Dorsolateral prefrontal cortex (tissue), 120 donors: ENCODE measurements at regions of chr17 and their contacts with region 1.

Region 1: DNA sequence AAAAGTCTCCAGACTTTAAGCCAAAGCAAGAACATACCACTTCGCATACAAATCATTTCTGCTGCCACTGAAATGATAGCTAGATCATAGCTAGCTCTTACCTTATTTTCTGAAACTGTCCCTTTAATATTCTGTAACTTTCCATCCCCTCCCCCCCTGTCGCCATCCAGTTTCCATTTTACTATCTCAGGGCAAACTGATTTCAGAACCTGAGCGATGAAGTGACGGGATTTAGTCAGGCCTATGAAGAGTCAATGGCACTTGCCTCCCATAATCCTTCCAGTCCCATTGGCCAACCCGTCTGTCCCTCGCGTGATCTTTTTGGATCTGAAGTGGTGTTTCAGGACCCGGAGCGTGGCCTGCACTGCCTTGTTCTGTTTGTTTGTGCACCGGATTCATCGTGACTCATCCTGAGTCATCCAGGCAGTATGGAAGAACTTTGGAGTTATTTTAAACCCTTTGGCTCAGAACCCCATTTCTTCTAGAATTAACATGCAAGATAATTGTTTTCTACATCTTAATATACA is 199.8 kb upstream of the CHMP6 start:
- DNase-seq: peak in 5 of 10 donors; percentile 37 to 84 (median 73)
- H3K4me3 ChIP-seq: peak overlapping the region in 15 of 59 donors; percentile 2 to 36 (median 20)
- H3K27ac ChIP-seq: peak overlapping the region in 56 of 59 donors; percentile 21 to 87 (median 74)
- H3K27me3 ChIP-seq: no peaks in the 10 kb centered on the region
- CTCF ChIP-seq: no peak

Region 2: GRCh38 chr17:80755650-80756405 is 36.0 kb before region 1 on chr17:
- intact Hi-C with region 1: loop called in 1 of 2 experiments (anchors 5 kb)
- DNase-seq: no peak
- H3K4me3 ChIP-seq: no peak overlapping the region
- H3K27ac ChIP-seq: no peak overlapping the region
- H3K27me3 ChIP-seq: no peaks in the 10 kb centered on the region
- CTCF ChIP-seq: peak in 8 of 56 donors; percentile 7 to 37 (median 18)

Region 3: DNA sequence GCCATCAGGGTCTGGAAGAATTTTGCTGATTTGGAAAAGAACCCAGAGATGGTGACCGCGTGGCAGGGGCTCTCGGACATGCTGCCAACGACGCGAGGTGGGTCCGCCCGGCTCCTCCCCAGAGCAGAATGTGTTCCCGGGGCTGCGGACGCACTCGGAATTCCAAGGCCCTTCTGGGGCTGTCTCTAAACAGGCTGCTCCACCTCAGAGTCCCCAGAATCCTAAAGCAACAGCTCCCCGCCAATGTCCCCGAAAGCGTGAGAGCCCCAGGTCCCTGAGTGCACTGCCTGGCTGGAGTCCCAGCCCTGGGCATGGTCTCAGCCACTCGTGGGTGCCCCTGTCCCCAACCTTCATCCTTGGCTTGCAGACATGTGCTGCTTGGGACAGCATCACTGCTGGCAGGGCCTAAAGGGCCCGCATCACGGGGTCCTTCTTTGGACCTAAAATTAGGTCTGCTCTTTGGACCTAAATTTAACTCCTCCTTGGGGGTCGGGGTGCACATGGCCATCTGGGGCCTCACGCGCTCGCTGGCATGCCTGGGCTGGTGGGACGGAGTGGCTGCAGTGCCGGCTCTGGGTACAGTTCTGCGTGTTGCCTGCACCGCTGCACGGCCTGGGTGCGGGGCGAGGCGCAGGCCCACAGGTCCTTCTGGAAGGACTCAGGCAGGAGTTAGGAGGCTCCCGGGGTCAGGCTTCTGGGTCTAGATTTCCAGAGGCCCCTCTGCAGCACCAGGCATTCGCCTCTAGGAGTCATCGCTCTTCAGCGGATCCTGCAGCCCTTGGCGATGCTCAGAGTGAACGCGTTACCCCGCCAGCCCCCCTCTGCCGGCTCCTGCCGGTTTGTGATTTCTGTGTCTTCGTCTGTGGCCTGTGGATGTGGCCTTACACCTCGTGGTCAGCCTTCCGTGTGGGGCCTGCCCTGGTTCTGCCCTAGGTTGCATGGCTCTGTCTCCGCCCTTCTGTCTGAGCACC is 157.9 kb after region 1 on chr17:
- intact Hi-C with region 1: no loop called
- DNase-seq: peak in 4 of 10 donors; percentile 26 to 38 (median 35)
- H3K4me3 ChIP-seq: no peak overlapping the region
- H3K27ac ChIP-seq: peak overlapping the region in 1 of 59 donors; percentile 2
- H3K27me3 ChIP-seq: no peaks in the 10 kb centered on the region
- CTCF ChIP-seq: peak in 1 of 56 donors; percentile 7